ENCODE measurements at regions of chr10 and their contacts with region 1.

Region 1: GRCh38 chr10:7410862-7411670 is at the start of gene SFMBT2:
- DNase-seq: peak; percentile 75
- ATAC-seq: peak; percentile 59
- H3K4me3 Mint-ChIP-seq: peak within 1 kb of the TSS; percentile 98
- H3K27ac Mint-ChIP-seq: peak within 1 kb of the TSS; percentile 95
- H3K4me1 Mint-ChIP-seq: peaks cover 26% of the 10 kb centered on the region
- H3K27me3 Mint-ChIP-seq: peaks cover 23% of the 10 kb centered on the region
- total RNA-seq, gene SFMBT2: 50.6 to 52.4 TPM

Region 2: GRCh38 chr10:7192831-7193361 is 218.2 kb before region 1 on chr10:
- POLR2A ChIA-PET with region 1: interaction called, 12 read pairs
- DNase-seq: peak; percentile 82
- ATAC-seq: peak; percentile 89
- H3K4me3 Mint-ChIP-seq: peak overlapping the region; percentile 83
- H3K27ac Mint-ChIP-seq: peak overlapping the region; percentile 99
- H3K4me1 Mint-ChIP-seq: peaks cover 51% of the 10 kb centered on the region
- H3K27me3 Mint-ChIP-seq: no peaks in the 10 kb centered on the region

Region 3: DNA sequence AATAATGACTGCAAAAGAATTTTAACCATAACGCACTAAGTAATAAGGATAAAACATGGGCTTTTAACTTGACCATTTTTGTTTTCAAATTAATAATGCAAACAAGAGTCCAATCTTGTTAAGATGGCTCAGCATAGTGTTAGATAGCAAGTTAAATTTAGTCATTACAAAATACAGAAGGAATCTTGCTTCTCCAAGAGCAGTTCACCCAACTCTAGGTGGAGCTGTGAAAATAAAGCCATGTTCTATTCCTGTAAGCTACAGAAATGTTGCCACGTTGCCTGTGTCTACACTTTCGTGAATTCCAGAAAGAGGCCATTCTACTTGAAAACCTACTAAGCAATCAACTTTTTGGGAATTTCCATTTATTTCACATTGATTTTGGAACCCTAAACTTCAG is 192.1 kb before region 1 on chr10:
- POLR2A ChIA-PET with region 1: no interaction called
- DNase-seq: no peak
- ATAC-seq: no peak
- H3K4me3 Mint-ChIP-seq: no peak overlapping the region
- H3K27ac Mint-ChIP-seq: no peak overlapping the region
- H3K4me1 Mint-ChIP-seq: peaks cover 6% of the 10 kb centered on the region
- H3K27me3 Mint-ChIP-seq: no peaks in the 10 kb centered on the region

Region 4: GRCh38 chr10:7383442-7383841 is 27.6 kb before region 1 on chr10:
- POLR2A ChIA-PET with region 1: interaction called, 12 read pairs
- DNase-seq: no peak
- ATAC-seq: peak; percentile 87
- H3K4me3 Mint-ChIP-seq: peak overlapping the region; percentile 57
- H3K27ac Mint-ChIP-seq: peak overlapping the region; percentile 64
- H3K4me1 Mint-ChIP-seq: peaks cover 65% of the 10 kb centered on the region
- H3K27me3 Mint-ChIP-seq: no peaks in the 10 kb centered on the region

Region 5: GRCh38 chr10:7484456-7485243 is 73.6 kb after region 1 on chr10:
- POLR2A ChIA-PET with region 1: interaction called, 24 read pairs
- DNase-seq: peak; percentile 47
- ATAC-seq: peak; percentile 95
- H3K4me3 Mint-ChIP-seq: peak overlapping the region; percentile 76
- H3K27ac Mint-ChIP-seq: peak overlapping the region; percentile 100
- H3K4me1 Mint-ChIP-seq: peaks cover 82% of the 10 kb centered on the region
- H3K27me3 Mint-ChIP-seq: no peaks in the 10 kb centered on the region

Measured in activated naive CD8-positive, alpha-beta T cell treated with anti-CD3 and anti-CD28 coated beads, Interleukin-2, amount 10 ng/mL, durations not matched to agents 7 days and 5 days (primary cell).